ENCODE measurements at regions of chr1 and their contacts with region 1.

Region 1: DNA sequence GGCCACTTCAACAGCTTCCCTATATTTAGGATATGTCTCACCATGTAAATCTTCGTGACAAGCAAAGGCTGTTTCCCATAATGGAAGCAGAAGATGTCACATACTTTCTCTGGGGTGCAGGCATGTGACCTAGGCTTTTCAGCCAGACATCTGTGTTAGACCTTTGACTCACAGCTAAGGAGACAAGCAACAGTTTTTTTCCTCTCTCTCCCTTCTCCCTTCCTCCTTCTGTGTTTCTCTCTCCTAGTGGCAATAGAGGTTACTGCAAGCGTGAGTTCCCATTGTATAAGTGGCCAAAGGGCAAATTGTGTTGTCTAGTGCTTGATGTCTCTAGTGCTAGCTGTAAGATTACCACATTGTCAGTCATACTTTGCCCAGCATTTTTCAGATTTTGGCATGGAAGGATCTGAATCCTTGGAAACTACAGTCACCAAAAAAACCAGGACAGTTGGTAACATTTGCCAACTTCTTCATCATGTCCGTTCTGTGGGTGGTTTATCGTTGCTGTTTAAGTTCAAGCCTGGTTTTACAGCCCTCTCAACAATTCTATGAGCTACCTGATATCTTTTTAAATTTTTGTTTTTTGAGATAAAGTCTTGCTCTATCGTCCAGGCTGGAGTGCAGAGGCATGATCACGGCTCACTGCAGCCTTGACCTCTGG is 44.4 kb upstream of the RABGAP1L start:
- H3K4me3 ChIP-seq: no peak overlapping the region
- H3K27ac ChIP-seq: no peak overlapping the region
- H3K4me1 ChIP-seq: no peaks in the 10 kb centered on the region
- CTCF ChIP-seq: no peak; the same call in 1 of the 2 replicates

Region 2: DNA sequence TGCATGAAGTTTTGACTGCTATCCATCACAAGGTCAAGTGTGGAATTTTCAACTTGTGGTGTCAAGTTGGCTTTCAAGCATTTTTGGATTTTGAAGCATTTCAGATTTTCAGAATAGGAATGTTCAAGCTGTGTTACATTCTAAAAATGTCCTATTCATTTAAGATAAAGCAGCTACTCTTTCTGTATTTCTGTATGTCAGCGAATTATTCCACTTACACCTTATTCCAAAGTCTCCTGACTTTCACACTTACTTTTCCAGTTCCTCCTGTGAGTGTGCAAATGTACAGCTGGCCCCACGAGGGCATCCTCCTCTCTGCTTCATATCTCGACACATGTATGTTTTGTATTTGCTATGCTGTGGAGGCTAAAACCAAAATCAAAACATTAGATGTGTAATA is 144.7 kb before region 1 on chr1:
- CTCF ChIA-PET with region 1: no interaction called
- POLR2A ChIA-PET with region 1: no interaction called
- H3K4me3 ChIP-seq: no peak overlapping the region
- H3K27ac ChIP-seq: no peak overlapping the region
- H3K4me1 ChIP-seq: no peaks in the 10 kb centered on the region
- CTCF ChIP-seq: no peak

Region 3: DNA sequence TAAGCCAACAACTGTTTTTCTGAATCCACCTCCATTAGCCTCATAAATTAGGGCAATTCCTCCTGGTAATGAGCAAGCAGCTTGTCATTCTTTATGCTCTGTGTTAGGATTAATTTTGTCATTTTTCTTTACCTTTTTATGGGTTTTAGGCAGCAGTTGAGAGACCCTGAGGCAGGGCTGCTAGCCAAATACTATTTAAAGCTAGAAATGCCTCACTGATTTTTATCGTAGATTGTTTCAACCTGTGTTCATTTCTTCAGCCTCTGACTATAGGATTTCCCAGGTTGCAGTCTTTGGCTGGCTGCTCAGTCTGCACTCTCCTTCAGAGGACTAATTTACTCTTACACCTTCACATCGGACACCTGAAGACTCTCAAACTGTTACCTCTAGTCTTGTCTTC is 17.5 kb before region 1 on chr1:
- CTCF ChIA-PET with region 1: interaction called, 10 read pairs
- POLR2A ChIA-PET with region 1: no interaction called
- H3K4me3 ChIP-seq: no peak overlapping the region
- H3K27ac ChIP-seq: no peak overlapping the region
- H3K4me1 ChIP-seq: no peaks in the 10 kb centered on the region
- CTCF ChIP-seq: no peak